ENCODE measurements at regions of chr6 and their contacts with region 1.

Region 1: GRCh38 chr6:118697554-118697953 is 46.2 kb upstream of the CEP85L start:
- DNase-seq: no peak
- ATAC-seq: peak; percentile 65
- H3K4me3 ChIP-seq: no peak overlapping the region
- H3K27ac ChIP-seq: no peak overlapping the region
- H3K4me1 ChIP-seq: peaks cover 0 to 15% of the 10 kb centered on the region in 2 experiments; a peak in 3 of 5 replicates
- H3K27me3 ChIP-seq: no peaks in the 10 kb centered on the region
- CTCF ChIP-seq: no peak
- EP300 ChIP-seq: no peak
- POLR2A ChIP-seq: no peak
- RAD21 ChIP-seq: no peak

Region 2: DNA sequence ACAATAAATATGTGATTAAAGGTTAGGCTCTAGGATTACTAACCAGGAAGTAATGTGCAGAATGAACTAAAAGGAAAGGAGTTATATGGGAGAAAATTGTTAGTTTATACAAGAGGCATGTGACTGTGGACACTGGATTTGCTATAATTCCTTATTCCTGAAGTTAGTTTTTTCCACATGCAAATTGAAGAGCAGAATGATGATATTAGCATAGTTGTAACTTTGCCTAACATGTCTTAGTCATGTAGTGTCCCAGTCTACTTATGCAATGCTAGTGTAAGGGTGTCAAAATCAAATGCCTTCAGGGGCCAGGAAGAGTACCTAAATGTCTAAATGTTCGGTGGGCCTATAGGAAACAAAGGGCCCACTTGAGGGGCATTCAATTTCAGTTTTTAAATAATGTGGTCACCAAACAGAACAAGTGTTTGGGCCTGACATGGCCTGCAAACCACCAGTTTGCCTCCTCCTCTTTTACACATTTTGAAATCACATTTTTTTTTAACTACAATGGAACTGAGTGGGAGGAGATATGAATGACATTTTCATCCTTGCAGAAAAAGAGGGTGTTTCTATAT is 18.1 kb before region 1 on chr6:
- CTCF ChIA-PET with region 1: no interaction called
- POLR2A ChIA-PET with region 1: interaction called, 11 read pairs
- in situ Hi-C with region 1: no loop called
- intact Hi-C with region 1: no loop called
- DNase-seq: no peak
- ATAC-seq: no peak
- H3K4me3 ChIP-seq: no peak overlapping the region
- H3K27ac ChIP-seq: no peak overlapping the region
- H3K4me1 ChIP-seq: peaks cover 4 to 20% of the 10 kb centered on the region in 2 experiments; a peak in 4 of 5 replicates
- H3K27me3 ChIP-seq: no peaks in the 10 kb centered on the region
- CTCF ChIP-seq: no peak
- EP300 ChIP-seq: no peak
- POLR2A ChIP-seq: no peak
- RAD21 ChIP-seq: no peak

Region 3: GRCh38 chr6:118724211-118724610 is 26.7 kb after region 1 on chr6:
- CTCF ChIA-PET with region 1: no interaction called
- POLR2A ChIA-PET with region 1: no interaction called
- in situ Hi-C with region 1: no loop called
- intact Hi-C with region 1: no loop called
- DNase-seq: no peak
- ATAC-seq: peak; percentile 54
- H3K4me3 ChIP-seq: no peak overlapping the region
- H3K27ac ChIP-seq: no peak overlapping the region
- H3K4me1 ChIP-seq: peaks cover 0 to 4% of the 10 kb centered on the region in 2 experiments; a peak in 3 of 5 replicates
- H3K27me3 ChIP-seq: no peaks in the 10 kb centered on the region
- CTCF ChIP-seq: no peak
- EP300 ChIP-seq: no peak
- POLR2A ChIP-seq: no peak
- RAD21 ChIP-seq: no peak

Region 4: GRCh38 chr6:118825661-118826060 is 128.1 kb after region 1 on chr6:
- CTCF ChIA-PET with region 1: no interaction called
- POLR2A ChIA-PET with region 1: no interaction called
- in situ Hi-C with region 1: no loop called
- intact Hi-C with region 1: no loop called
- DNase-seq: peak in 3 of 4 experiments; percentile 20 to 72 (median 46)
- ATAC-seq: peak; percentile 90
- H3K4me3 ChIP-seq: no peak overlapping the region
- H3K27ac ChIP-seq: no peak overlapping the region; the same call in 1 of the 3 replicates
- H3K4me1 ChIP-seq: peaks cover 0 to 8% of the 10 kb centered on the region in 2 experiments; a peak in 2 of 5 replicates
- H3K27me3 ChIP-seq: no peaks in the 10 kb centered on the region
- CTCF ChIP-seq: no peak
- EP300 ChIP-seq: no peak; the same call in 1 of the 2 replicates
- POLR2A ChIP-seq: no peak
- RAD21 ChIP-seq: no peak